Activated CD4-positive, alpha-beta T cell treated with anti-CD3 and anti-CD28 coated beads for 36 hours (primary cell): ENCODE measurements at regions of chr6 and their contacts with region 1.

Region 1: GRCh38 chr6:109690737-109691621 is at the starts of genes AK9 and FIG4:
- DNase-seq: peak; percentile 95
- ATAC-seq: peak; percentile 94
- H3K4me3 Mint-ChIP-seq: peak within 1 kb of the TSS; percentile 94
- H3K27ac Mint-ChIP-seq: peak within 1 kb of the TSS; percentile 92
- H3K4me1 Mint-ChIP-seq: peaks cover 38% of the 10 kb centered on the region
- H3K27me3 Mint-ChIP-seq: no peaks in the 10 kb centered on the region
- total RNA-seq, gene AK9: 3.5 to 5.2 TPM
- total RNA-seq, gene FIG4: 14.4 to 17.5 TPM

Region 2: DNA sequence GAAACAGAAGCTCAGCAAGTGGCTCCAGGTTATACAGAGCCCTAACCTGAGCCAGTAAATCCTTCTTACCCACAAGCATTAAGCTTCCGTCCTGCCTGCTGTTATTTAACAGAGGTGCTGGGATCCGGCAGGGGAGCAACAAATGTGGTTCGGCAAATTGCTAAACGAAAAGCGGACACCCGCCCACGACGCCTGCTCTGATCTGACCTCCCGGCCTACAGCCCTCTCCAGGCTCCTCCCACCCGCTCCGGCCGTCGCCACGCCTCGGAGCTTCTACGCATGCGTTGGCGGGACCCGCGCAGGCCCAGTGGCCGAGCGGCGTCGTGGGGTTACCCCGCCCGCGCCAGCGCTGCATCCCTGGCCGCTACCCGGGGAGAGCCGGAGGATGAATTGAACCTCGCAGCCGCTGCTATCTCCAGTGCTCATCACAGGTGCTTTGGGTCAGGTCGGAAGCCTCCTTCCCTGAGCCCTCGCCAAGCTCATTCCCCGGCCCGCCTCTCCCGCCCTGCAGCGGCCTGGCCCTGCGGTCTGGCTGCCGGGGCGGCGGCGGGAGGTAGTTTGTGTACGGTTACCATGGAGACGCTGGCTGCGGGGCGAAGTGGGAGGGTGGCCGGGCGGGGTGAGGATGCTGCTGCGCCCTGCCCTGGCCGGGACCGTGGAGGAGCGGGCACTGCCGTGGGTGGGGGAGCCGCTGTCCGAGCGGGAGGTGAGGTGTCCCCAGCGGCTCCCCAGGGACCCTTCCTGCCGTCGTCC is 842.7 kb before region 1 on chr6 and contains the start of gene ARMC2:
- CTCF ChIA-PET with region 1: no interaction called
- POLR2A ChIA-PET with region 1: no interaction called
- intact Hi-C with region 1: loop called in 1 of 2 experiments (anchors 2 kb)
- DNase-seq: peak; percentile 91
- ATAC-seq: peak; percentile 93
- H3K4me3 Mint-ChIP-seq: peak within 1 kb of the TSS; percentile 78
- H3K27ac Mint-ChIP-seq: peak within 1 kb of the TSS; percentile 74
- H3K4me1 Mint-ChIP-seq: peaks cover 23% of the 10 kb centered on the region
- H3K27me3 Mint-ChIP-seq: no peaks in the 10 kb centered on the region
- total RNA-seq, gene ARMC2: 3.9 to 5.2 TPM

Region 3: GRCh38 chr6:109440331-109441068 is 250.5 kb before region 1 on chr6 and contains the starts of genes PPIL6 and SMPD2:
- CTCF ChIA-PET with region 1: interaction called, 3 read pairs
- POLR2A ChIA-PET with region 1: no interaction called
- intact Hi-C with region 1: loop called (anchors 5 kb)
- DNase-seq: peak; percentile 86
- ATAC-seq: peak; percentile 85
- H3K4me3 Mint-ChIP-seq: peak within 1 kb of the TSS; percentile 89
- H3K27ac Mint-ChIP-seq: peak within 1 kb of the TSS; percentile 85
- H3K4me1 Mint-ChIP-seq: peaks cover 18% of the 10 kb centered on the region
- H3K27me3 Mint-ChIP-seq: no peaks in the 10 kb centered on the region
- total RNA-seq, gene PPIL6: 0.09 TPM in 1 of 2 experiments, not detected in the other
- total RNA-seq, gene SMPD2: 7.5 to 9.5 TPM

Region 4: GRCh38 chr6:109526905-109527628 is 163.9 kb before region 1 on chr6:
- CTCF ChIA-PET with region 1: no interaction called
- POLR2A ChIA-PET with region 1: no interaction called
- intact Hi-C with region 1: loop called (anchors 2 to 5 kb)
- DNase-seq: peak; percentile 66
- ATAC-seq: peak; percentile 84
- H3K4me3 Mint-ChIP-seq: no peak overlapping the region
- H3K27ac Mint-ChIP-seq: no peak overlapping the region
- H3K4me1 Mint-ChIP-seq: no peaks in the 10 kb centered on the region
- H3K27me3 Mint-ChIP-seq: no peaks in the 10 kb centered on the region

Region 5: DNA sequence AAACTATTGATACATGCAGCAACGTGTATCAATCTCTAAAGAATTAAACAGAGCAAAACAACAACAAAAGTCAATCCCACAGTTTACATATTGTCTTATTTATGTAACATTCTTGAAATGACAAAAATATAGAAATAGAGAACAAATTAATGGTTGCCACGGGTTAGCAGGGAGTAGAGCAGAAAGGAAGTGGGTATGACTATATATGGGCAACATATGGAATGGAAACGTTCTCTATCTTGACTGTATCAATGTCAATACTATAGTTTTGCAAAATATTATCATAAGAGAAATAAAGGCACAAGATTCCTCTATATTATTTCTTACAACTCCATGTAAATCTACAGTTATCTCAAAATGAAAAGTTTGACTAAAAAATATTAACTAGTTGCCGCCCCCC is 12.7 kb before region 1 on chr6:
- CTCF ChIA-PET with region 1: interaction called, 4 read pairs
- POLR2A ChIA-PET with region 1: no interaction called
- intact Hi-C with region 1: loop called in 1 of 2 experiments (anchors 1 kb)
- DNase-seq: no peak
- ATAC-seq: no peak
- H3K4me3 Mint-ChIP-seq: no peak overlapping the region
- H3K27ac Mint-ChIP-seq: no peak overlapping the region
- H3K4me1 Mint-ChIP-seq: peaks cover 26% of the 10 kb centered on the region
- H3K27me3 Mint-ChIP-seq: no peaks in the 10 kb centered on the region

Region 6: GRCh38 chr6:110179401-110180227 is 488.6 kb after region 1 on chr6 and contains the start of gene WASF1:
- CTCF ChIA-PET with region 1: interaction called, 3 read pairs
- POLR2A ChIA-PET with region 1: no interaction called
- intact Hi-C with region 1: loop called (anchors 1 to 2 kb)
- DNase-seq: peak; percentile 94
- ATAC-seq: peak; percentile 89
- H3K4me3 Mint-ChIP-seq: no peak within 1 kb of the TSS
- H3K27ac Mint-ChIP-seq: peak within 1 kb of the TSS; percentile 7
- H3K4me1 Mint-ChIP-seq: peaks cover 5% of the 10 kb centered on the region
- H3K27me3 Mint-ChIP-seq: peaks cover 10% of the 10 kb centered on the region
- total RNA-seq, gene WASF1: 4.2 to 4.6 TPM